Esophagus squamous epithelium (tissue), 5 donors: ENCODE measurements at regions of chr7 and their contacts with region 1.

Region 1: DNA sequence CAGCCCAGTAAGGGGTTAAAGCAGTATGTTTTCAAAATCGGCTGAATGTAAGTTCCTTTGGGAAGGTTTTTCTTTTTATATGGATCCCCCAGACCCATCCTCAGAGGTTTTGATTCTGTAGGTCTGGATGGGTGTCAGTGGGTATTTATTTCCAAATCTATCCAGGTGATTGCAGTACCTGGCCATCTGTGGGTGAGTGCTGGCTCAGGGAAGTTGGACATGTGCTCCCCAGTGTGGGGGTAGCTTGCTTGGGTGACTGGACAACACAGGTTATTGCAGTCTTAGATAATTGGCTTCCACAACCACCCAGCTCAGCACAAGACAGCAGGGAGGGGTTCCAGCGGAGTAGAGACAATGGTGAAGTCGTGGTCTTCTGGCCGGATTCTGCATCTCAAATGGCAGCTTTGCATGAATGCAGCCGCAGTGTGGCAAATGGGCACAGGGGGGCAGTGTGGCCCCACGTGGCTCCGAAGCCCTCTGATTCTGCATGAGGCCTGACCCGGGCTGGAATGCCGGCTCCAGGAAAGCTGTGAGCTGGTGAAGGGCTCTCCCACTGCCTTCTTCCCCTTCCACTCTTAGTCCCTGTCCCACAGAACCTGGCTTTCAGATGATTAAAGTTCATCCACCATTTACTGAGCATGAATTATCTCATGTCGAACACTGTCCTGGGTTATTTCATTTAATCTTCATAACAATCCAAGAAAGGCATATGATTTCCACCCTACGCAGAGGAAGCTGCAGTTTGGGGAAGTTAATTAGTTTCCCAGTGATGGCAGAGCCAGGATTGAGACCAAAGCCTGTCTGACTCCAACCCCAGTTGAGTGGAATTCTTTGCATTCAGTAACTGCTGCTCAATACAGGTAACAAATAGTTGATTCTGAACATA is 64.5 kb upstream of the SYPL1 start:
- DNase-seq: peak; percentile 6
- H3K4me3 ChIP-seq: no peak overlapping the region
- H3K27ac ChIP-seq: peak overlapping the region in 3 of 4 donors; percentile 25 to 61 (median 26)
- H3K4me1 ChIP-seq: peaks cover 5 to 46% (median 13%) of the 10 kb centered on the region in 3 donors
- H3K27me3 ChIP-seq: peaks cover 0 to 12% (median 2%) of the 10 kb centered on the region in 4 donors
- CTCF ChIP-seq: peak; percentile 80 to 96 (median 92)
- POLR2A ChIP-seq: no peak

Region 2: GRCh38 chr7:106461993-106462859 is 285.6 kb after region 1 on chr7:
- intact Hi-C with region 1: loop called (anchors 2 kb)
- DNase-seq: no peak
- H3K4me3 ChIP-seq: no peak overlapping the region
- H3K27ac ChIP-seq: no peak overlapping the region
- H3K4me1 ChIP-seq: peaks cover 0 to 28% (median 6%) of the 10 kb centered on the region in 3 donors
- H3K27me3 ChIP-seq: no peaks in the 10 kb centered on the region
- CTCF ChIP-seq: peak; percentile 48 to 74 (median 66)
- POLR2A ChIP-seq: no peak